Psoas muscle (tissue), 8 donors: ENCODE measurements at regions of chr9 and their contacts with region 1.

Region 1: DNA sequence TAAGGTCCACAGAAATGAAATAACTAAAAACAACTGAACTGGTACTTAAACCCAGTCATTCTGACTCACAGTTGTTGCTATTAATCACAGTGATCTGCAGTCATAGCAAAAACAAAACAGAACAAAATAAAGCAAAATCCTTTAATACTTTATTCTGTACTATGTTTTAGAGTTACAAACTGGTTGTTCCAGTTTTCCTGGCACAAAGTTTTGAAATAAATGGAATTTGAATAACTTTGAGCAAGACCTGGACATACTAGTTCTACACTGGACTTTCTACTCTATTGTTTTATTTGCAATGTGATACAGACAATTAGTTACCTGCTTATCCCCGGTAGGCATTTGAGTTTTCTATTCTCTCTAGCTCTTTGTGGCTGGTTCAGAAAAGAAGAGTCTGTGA is 147.9 kb downstream of the DMRT2 start:
- DNase-seq: no peak
- ATAC-seq: no peak
- H3K4me3 ChIP-seq: no peak overlapping the region
- H3K27ac ChIP-seq: no peak overlapping the region
- H3K4me1 ChIP-seq: peaks cover 6% of the 10 kb centered on the region
- H3K27me3 ChIP-seq: no peaks in the 10 kb centered on the region
- CTCF ChIP-seq: no peak

Region 2: GRCh38 chr9:1115370-1115769 is 82.7 kb before region 1 on chr9:
- intact Hi-C with region 1: no loop called
- DNase-seq: no peak
- ATAC-seq: no peak
- H3K4me3 ChIP-seq: no peak overlapping the region
- H3K27ac ChIP-seq: no peak overlapping the region
- H3K4me1 ChIP-seq: no peaks in the 10 kb centered on the region
- H3K27me3 ChIP-seq: no peaks in the 10 kb centered on the region
- CTCF ChIP-seq: no peak

Region 3: GRCh38 chr9:1125741-1126140 is 72.3 kb before region 1 on chr9:
- intact Hi-C with region 1: loop called in 1 of 2 experiments (anchors 10 kb)
- DNase-seq: no peak
- ATAC-seq: no peak
- H3K4me3 ChIP-seq: no peak overlapping the region
- H3K27ac ChIP-seq: no peak overlapping the region
- H3K4me1 ChIP-seq: no peaks in the 10 kb centered on the region
- H3K27me3 ChIP-seq: no peaks in the 10 kb centered on the region
- CTCF ChIP-seq: no peak